ENCODE measurements at regions of chr5 and their contacts with region 1.

Region 1: GRCh38 chr5:143355720-143356119 is 47.8 kb downstream of the NR3C1 start:
- DNase-seq: no peak
- H3K4me3 ChIP-seq: no peak overlapping the region
- H3K27ac ChIP-seq: no peak overlapping the region
- H3K4me1 ChIP-seq: peaks cover 25% of the 10 kb centered on the region
- CTCF ChIP-seq: no peak

Region 2: DNA sequence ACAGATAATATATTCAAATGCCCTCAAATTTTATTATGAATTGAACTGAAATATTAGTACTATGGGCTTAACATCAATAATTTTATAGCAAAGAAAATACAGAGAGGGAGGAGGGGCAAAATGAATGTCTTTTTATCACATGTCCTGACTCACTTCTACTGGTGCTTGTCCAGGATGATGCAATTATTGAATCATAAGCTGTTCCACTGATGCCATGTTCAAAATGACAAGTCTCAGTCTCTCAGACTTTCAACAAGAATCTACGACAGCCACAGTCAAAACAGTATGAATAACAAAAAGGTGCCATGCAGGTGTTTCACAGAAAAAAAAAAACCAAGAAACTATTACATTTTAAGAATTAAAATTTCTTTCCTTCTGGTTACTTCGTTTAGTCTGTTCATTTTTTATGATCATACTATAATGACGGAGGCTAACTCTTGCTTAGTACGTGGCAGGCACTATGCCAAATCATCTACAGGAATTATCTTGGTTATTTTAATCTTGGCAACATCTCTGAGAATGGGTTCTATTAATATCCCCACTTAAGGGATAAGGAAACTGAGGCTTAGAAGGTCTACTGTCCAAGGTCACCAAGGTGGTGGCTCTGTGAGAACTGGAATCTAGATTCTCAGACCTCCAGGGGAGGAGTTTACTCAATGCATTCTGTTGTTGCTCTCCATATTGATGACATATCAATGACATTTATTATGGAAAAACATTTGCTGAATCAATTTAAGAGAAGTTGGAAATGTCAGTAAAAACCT is 13.7 kb before region 1 on chr5:
- CTCF ChIA-PET with region 1: interaction called, 3 read pairs
- POLR2A ChIA-PET with region 1: interaction called, 10 read pairs
- intact Hi-C with region 1: no loop called
- DNase-seq: no peak
- H3K4me3 ChIP-seq: no peak overlapping the region
- H3K27ac ChIP-seq: no peak overlapping the region
- H3K4me1 ChIP-seq: peaks cover under 1% of the 10 kb centered on the region
- CTCF ChIP-seq: no peak

Region 3: DNA sequence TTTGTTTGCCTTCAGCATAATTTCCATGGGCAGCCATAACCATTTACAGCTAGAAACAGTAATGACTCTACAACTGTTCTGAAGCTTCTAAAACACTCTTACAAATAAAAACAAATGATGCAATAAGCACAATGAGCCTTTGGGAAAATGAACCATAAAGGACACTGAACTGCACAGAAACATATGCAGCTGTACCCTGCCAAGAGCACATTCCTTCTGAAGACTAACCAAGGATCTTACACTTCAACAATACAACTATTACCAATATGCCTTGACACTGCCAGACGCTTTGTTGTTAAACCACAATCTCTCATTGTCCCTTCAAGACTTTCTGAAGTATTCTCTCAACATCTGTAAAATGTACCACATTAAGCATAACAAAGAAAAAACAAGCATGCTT is 352.1 kb after region 1 on chr5:
- CTCF ChIA-PET with region 1: no interaction called
- POLR2A ChIA-PET with region 1: no interaction called
- intact Hi-C with region 1: no loop called
- DNase-seq: no peak
- H3K4me3 ChIP-seq: no peak overlapping the region
- H3K27ac ChIP-seq: no peak overlapping the region
- H3K4me1 ChIP-seq: no peaks in the 10 kb centered on the region
- CTCF ChIP-seq: no peak

Region 4: DNA sequence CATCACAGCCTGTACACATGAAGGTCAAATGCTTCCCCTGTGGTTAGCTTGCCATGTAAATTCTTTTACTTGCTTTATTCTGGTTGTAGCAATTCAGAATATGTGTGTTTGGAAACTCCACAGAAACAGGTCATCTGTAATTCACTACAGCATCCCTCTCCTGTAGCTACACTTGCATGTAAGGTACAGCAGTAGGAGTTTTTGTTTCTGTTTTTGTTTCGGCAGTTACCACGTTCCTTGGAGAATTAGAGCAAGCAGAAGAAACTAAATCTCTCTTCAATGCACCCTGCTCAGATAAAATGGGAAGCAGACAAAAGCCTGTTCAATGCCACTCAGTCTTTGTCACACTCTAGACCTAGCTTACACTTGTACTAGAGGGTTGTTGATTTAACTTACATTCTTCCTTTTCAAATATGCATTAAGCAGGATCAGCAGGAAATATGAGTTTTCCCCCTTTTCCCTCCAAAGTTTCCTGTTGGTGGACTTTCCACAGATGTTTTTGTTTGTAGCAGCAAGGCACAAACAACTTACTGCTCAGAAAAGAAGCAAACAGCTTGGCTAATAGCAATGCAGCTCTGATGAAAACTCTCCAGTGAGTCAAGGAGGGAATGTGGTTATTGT is 733.8 kb after region 1 on chr5:
- CTCF ChIA-PET with region 1: no interaction called
- POLR2A ChIA-PET with region 1: no interaction called
- intact Hi-C with region 1: no loop called
- DNase-seq: no peak
- H3K4me3 ChIP-seq: no peak overlapping the region
- H3K27ac ChIP-seq: no peak overlapping the region
- H3K4me1 ChIP-seq: no peaks in the 10 kb centered on the region
- CTCF ChIP-seq: no peak

Measured in OCI-LY7 (cell line).